ENCODE measurements at regions of chr11 and their contacts with region 1.

Region 1: DNA sequence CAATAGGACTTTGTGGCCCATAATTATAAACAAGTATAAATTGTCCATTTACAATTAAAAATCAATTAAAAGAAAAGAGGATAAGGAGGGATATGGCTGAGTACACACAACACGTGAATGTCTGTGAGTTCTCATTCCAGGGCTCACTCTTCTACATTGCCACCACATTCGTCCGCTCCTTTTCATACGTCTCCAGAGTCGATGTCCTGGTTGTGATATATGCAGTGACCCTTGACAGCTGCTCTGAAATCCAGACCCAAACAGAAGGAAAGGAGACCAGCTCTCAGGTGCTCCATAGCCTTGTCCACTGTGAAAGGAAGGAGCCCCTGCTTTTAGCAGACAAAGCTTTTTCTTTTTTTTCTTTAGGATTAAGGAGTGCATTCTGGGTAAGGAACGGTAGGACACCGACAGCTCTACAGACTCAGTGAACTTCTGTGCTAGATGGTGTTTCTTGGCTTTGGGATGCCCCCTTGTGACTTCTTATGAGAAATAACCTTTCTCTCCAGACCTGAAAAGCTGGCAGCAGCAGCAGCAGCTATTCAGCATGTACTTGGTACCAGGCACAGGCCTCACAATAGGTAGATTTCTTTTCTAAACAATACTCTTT is 19.7 kb upstream of the DNAJB13 start:
- DNase-seq: peak; percentile 13
- H3K4me3 Mint-ChIP-seq: no peak overlapping the region
- H3K27ac Mint-ChIP-seq: no peak overlapping the region
- H3K4me1 Mint-ChIP-seq: no peaks in the 10 kb centered on the region
- H3K27me3 Mint-ChIP-seq: no peaks in the 10 kb centered on the region

Region 2: GRCh38 chr11:73913466-73913865 is 17.7 kb before region 1 on chr11:
- CTCF ChIA-PET with region 1: interaction called, 5 read pairs
- POLR2A ChIA-PET with region 1: no interaction called
- intact Hi-C with region 1: loop called (anchors 1 kb)
- DNase-seq: no peak
- H3K4me3 Mint-ChIP-seq: no peak overlapping the region
- H3K27ac Mint-ChIP-seq: no peak overlapping the region
- H3K4me1 Mint-ChIP-seq: no peaks in the 10 kb centered on the region
- H3K27me3 Mint-ChIP-seq: no peaks in the 10 kb centered on the region